ENCODE measurements at regions of chr4 and their contacts with region 1.

Region 1: DNA sequence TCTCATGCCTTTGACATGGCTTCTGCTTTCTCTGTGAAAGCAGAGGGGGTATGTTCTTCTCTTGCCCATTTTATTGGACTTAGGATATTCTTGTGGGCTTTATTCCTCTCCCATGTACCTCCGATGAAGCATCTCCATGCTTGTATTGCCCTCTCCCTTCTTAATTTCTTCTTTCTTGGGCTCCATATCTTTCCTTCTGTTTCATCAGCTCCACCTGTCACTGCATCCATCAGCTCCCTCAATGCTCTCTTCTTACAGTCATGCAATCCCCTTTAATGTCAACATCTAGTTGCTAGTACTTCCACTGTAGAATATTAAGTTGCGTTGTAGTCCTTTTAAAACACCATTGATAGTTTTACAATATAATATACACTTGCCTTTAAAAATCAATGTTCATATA is 257.6 kb downstream of the GPAT3 start:
- DNase-seq: no peak
- ATAC-seq: no peak
- H3K4me3 ChIP-seq: no peak overlapping the region
- H3K27ac ChIP-seq: no peak overlapping the region
- H3K4me1 ChIP-seq: no peaks in the 10 kb centered on the region
- H3K27me3 ChIP-seq: no peaks in the 10 kb centered on the region
- CTCF ChIP-seq: no peak

Region 2: GRCh38 chr4:83731609-83732008 is 61.9 kb before region 1 on chr4:
- intact Hi-C with region 1: no loop called
- DNase-seq: no peak
- ATAC-seq: no peak
- H3K4me3 ChIP-seq: no peak overlapping the region
- H3K27ac ChIP-seq: no peak overlapping the region
- H3K4me1 ChIP-seq: no peaks in the 10 kb centered on the region
- H3K27me3 ChIP-seq: peaks cover 0 to 6% (median 0%) of the 10 kb centered on the region in 7 donors
- CTCF ChIP-seq: no peak

Region 3: DNA sequence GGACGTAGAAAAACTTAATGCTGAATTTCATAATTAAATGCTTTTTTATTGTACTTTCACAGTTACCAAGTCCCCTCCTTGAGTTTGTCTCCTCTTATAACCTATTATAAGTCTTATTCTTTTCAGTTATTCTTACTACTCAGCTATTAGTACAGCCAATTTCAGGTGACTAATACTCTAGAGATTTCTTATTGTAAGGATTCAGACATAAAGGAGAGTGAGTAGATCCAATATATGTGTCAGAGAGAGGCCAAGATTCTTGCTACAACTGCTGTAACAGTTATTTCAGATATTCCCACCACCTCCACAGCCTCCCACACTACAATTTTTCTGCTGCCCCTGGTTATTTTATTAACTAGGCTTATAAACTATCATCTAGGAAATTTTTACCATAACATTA is 16.9 kb after region 1 on chr4:
- intact Hi-C with region 1: loop called in 1 of 10 experiments (anchors 1 kb)
- DNase-seq: no peak
- ATAC-seq: no peak
- H3K4me3 ChIP-seq: no peak overlapping the region
- H3K27ac ChIP-seq: no peak overlapping the region
- H3K4me1 ChIP-seq: no peaks in the 10 kb centered on the region
- H3K27me3 ChIP-seq: no peaks in the 10 kb centered on the region
- CTCF ChIP-seq: no peak